ENCODE measurements at regions of chr10 and their contacts with region 1.

Region 1: GRCh38 chr10:68781613-68782574 is 45.4 kb upstream of the STOX1 start:
- H3K4me3 ChIP-seq: no peak overlapping the region
- H3K27ac ChIP-seq: peak overlapping the region; percentile 12; the same call in 1 of the 2 replicates
- H3K4me1 ChIP-seq: no peaks in the 10 kb centered on the region
- CTCF ChIP-seq: no peak

Region 2: DNA sequence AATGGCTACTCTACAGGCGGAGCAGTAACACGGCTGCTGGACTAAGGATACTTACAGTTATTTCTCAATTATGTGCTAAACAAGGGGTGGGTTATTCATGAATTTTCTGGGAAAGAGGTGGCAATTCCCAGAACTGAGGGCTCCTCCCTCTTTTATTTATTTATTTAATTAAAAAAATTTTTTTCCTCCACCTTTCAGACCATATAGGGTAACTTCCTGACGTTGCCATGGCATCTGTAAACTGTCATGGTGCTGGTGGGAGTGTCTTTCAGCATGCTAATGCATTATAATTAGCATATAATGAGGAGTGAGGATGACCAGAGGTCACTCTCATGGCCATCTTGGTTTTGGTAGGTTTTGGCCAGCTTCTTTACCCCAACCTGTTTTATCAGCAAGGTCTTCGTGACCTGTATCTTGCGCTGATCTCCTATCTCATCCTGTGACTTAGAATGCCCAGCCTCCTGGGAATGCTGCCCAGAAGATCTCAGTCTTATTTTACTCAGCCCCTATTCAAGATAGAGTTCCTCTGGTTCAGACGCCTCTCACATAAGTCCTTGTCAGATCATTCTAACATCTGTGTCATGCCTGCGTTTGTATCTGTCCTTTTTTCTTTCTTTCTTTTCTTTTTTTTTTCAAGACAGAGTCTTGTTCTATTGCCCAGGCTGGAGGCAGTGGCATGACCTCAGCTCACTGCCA is 29.6 kb after region 1 on chr10:
- CTCF ChIA-PET with region 1: interaction called, 10 read pairs
- POLR2A ChIA-PET with region 1: no interaction called
- H3K4me3 ChIP-seq: no peak overlapping the region
- H3K27ac ChIP-seq: no peak overlapping the region
- H3K4me1 ChIP-seq: peaks cover 4% of the 10 kb centered on the region
- CTCF ChIP-seq: no peak